Activated naive CD8-positive, alpha-beta T cell treated with anti-CD3 and anti-CD28 coated beads, Interleukin-2, amount 10 ng/mL, durations not matched to agents 7 days and 5 days (primary cell): ENCODE measurements at regions of chr3 and their contacts with region 1.

Region 1: DNA sequence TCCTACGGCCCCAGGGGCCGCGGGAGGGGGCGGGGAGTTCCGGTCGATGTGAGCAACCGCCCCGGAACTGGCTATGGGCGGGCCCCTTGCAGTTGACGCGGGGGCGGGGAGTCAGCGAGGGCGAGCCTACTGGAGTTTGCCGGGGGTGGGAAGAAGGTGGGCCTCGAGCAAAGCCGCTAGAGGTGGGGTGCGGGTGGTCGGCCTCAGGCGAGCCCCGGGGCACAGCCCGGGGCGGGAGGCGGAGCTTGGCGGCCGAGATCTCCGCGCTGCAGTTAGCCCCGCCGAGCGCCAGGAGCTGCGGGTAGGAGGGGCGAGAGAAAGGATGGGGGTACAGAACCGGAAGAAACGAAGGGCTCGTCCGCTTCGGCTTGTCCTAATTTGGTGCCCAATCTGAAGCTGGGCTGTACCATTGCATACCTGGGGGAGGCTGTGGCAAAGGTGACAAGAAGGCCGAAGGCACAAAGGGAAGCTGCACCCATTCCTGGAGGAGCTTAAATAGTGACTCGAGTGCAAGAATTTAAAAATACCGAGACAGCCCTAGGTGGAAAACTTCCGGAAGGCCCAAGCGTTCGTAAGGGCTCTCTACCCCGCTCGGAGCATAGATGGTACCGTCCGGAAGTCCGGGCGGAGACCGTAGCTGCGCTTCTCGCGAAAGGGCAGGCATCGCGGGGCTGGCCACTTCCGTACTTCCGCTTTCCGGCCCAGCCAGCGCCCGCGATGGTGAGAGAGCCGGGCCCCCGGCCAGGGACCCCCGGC is at the starts of genes ARPC4 and TADA3:
- DNase-seq: peak; percentile 95
- ATAC-seq: peak; percentile 89
- H3K4me3 Mint-ChIP-seq: peak within 1 kb of the TSS; percentile 99
- H3K27ac Mint-ChIP-seq: peak within 1 kb of the TSS; percentile 100
- H3K4me1 Mint-ChIP-seq: peaks cover 51% of the 10 kb centered on the region
- H3K27me3 Mint-ChIP-seq: no peaks in the 10 kb centered on the region
- total RNA-seq, gene ARPC4: 225 to 227 TPM
- total RNA-seq, gene TADA3: 71.8 to 73.3 TPM

Region 2: DNA sequence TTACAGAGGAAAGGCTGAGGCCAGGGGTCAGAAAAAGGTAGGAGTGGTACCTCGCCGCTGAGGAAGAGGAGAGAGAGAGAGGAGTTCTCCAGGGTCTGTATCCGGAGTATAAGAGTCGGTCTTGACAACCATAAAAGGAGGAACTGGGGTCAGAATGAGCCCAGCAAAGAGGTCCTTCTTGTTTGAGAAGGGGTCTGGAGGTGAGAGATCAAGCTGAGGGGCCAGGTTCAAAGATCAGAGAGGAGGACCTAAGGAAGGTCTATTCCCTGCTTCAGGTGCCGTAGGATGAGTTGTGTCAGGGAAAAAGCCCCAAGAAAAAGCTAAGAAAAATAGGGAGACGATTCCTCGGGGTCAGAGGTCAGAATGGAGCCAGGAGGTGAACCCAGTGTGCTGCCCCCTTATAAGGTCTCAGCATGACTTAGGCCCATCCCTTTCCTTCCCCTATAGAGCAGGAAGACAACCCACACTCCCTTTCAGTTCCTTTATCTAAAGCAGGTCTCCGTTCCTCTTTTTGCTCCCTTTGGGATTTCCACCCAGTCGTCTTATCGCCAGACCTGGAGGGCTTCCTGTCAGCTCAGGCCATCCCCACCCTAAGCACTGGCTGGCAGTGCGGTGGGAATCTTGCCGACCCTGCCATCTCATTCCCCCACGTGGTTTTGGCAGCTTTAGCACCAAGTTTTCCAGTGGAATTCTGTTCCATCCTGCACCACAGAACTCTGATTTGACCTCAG is 142.6 kb before region 1 on chr3:
- POLR2A ChIA-PET with region 1: interaction called, 10 read pairs
- DNase-seq: no peak
- ATAC-seq: peak; percentile 30
- H3K4me3 Mint-ChIP-seq: peak overlapping the region; percentile 96
- H3K27ac Mint-ChIP-seq: peak overlapping the region; percentile 98
- H3K4me1 Mint-ChIP-seq: peaks cover 13% of the 10 kb centered on the region
- H3K27me3 Mint-ChIP-seq: peaks cover 1% of the 10 kb centered on the region

Region 3: GRCh38 chr3:9731206-9732079 is 61.1 kb before region 1 on chr3 and contains the start of gene BRPF1:
- POLR2A ChIA-PET with region 1: interaction called, 29 read pairs
- DNase-seq: peak; percentile 97
- ATAC-seq: peak; percentile 92
- H3K4me3 Mint-ChIP-seq: peak within 1 kb of the TSS; percentile 98
- H3K27ac Mint-ChIP-seq: peak within 1 kb of the TSS; percentile 96
- H3K4me1 Mint-ChIP-seq: peaks cover 60% of the 10 kb centered on the region
- H3K27me3 Mint-ChIP-seq: no peaks in the 10 kb centered on the region
- total RNA-seq, gene BRPF1: 57.3 to 58.8 TPM

Region 4: DNA sequence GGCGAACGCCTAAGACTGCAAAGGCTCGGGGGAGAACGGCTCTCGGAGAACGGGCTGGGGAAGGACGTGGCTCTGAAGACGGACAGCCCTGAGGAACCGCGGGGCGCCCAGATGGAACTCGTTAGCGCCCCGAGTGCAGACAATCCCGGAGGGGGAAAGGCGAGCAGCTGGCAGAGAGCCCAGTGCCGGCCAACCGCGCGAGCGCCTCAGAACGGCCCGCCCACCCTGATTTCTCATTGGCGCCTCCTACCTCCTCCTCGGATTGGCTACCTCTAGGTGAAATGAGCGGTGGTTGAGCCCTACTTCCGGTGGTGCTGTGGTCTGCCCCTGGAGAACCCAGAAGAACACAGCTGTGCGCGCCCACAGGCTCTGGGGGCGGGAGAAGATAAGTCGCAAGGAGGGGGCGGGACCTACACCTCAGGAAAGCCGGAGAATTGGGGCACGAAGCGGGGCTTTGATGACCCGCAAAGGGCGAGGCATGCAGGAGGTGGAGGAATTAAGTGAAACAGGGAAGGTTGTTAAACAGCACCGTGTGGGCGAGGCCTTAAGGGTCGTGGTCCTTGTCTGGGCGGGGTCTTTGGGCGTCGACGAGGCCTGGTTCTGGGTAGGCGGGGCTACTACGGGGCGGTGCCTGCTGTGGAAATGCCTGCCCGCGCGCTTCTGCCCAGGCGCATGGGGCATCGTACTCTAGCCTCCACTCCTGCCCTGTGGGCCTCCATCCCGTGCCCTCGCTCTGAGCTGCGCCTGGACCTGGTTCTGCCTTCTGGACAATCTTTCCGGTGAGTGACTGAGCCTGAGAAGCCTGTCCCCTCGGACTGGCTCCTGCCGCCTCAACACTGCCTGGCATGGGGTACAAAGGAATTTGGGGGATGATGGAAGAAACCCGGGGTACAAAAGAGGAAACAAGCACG is 42.7 kb before region 1 on chr3 and contains the start of gene OGG1:
- POLR2A ChIA-PET with region 1: interaction called, 27 read pairs
- DNase-seq: peak; percentile 96
- ATAC-seq: peak; percentile 91
- H3K4me3 Mint-ChIP-seq: peak within 1 kb of the TSS; percentile 98
- H3K27ac Mint-ChIP-seq: peak within 1 kb of the TSS; percentile 94
- H3K4me1 Mint-ChIP-seq: peaks cover 51% of the 10 kb centered on the region
- H3K27me3 Mint-ChIP-seq: no peaks in the 10 kb centered on the region
- total RNA-seq, gene OGG1: 41.3 to 46.1 TPM

Region 5: GRCh38 chr3:9769426-9770275 is 22.9 kb before region 1 on chr3 and contains the start of gene CAMK1:
- POLR2A ChIA-PET with region 1: interaction called, 18 read pairs
- DNase-seq: peak; percentile 81
- ATAC-seq: peak; percentile 96
- H3K4me3 Mint-ChIP-seq: peak within 1 kb of the TSS; percentile 77
- H3K27ac Mint-ChIP-seq: peak within 1 kb of the TSS; percentile 67
- H3K4me1 Mint-ChIP-seq: peaks cover 33% of the 10 kb centered on the region
- H3K27me3 Mint-ChIP-seq: no peaks in the 10 kb centered on the region
- total RNA-seq, gene CAMK1: 25.2 to 26.9 TPM

Region 6: DNA sequence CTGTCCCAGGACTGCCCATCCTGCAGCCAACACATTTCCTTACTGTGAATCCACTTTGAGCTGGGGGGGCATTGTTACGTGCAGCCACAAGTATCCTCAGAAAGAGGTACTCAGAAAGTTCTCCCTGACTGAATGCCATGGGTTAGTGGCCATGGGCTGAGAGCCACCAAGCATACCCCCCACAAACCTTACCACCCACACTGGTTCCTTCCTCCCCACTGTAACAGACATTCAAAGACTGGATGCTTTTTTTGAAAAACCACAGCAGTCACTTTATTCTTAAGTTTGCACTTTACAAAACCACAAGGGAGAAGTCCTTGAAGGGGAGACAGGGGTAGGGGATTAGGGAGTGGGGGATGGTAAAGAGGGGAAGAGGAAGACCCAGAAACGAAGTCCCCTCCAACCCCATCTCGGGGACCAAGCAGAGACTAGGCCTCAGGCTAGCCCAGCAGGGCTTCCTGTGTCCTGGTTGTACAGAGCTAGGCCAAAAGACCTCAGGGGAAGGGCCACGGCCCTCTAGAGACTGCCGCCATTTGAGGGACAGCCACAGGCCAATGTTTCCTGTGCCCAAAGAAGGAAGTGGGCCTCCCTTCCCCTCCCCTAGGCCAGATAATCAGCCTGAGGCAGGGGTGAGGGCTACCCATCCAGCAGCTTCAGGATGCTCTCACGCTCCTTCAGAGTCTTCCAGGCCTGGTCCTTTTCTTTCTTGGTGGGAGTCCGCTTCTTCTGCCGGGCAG is 12.7 kb before region 1 on chr3:
- POLR2A ChIA-PET with region 1: interaction called, 47 read pairs
- DNase-seq: peak; percentile 75
- ATAC-seq: peak; percentile 84
- H3K4me3 Mint-ChIP-seq: peak overlapping the region; percentile 67
- H3K27ac Mint-ChIP-seq: peak overlapping the region; percentile 94
- H3K4me1 Mint-ChIP-seq: peaks cover 63% of the 10 kb centered on the region
- H3K27me3 Mint-ChIP-seq: peaks cover 2% of the 10 kb centered on the region

Region 7: DNA sequence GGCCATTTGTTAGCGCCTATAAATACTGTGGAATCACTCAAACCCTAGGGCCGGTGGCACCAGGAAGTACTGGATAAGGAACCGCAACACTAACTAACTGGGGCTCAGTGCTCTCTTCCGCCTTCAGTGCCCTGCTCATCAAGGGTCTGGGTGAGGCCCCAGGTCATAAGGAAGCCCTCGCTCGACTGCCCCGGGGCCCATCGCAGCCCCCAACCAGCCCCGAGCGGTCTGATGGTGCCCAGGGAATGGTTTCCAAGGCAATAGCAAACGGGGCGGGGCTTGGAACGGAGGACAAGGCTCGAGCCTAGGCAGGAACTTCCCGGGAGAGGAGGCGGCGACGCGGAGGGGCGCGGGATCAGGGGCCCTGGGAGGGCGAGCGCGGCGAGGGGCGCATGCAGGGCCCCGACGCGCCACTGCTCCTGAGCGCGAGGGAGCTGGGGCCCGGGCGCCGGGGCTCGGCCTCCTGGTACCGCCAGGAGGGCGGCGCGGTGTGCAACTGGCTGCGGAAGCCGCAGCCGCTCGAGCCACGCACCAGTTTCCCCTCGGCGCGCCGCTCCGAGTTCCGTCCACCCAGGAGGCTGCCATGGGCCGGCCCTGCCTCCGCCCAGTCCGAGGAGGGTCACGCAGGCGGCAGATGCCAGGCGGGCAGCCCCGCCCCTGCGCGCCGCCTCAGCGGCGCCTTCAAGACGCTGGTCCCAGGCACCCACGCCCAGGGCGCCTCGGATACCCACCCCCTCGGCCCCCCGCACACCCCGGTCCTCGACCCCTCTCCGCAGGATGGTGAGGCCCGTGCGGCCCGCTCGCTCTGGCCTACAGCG is 17.2 kb after region 1 on chr3 and contains the start of gene TTLL3:
- POLR2A ChIA-PET with region 1: interaction called, 36 read pairs
- DNase-seq: peak; percentile 73
- ATAC-seq: peak; percentile 71
- H3K4me3 Mint-ChIP-seq: peak within 1 kb of the TSS; percentile 88
- H3K27ac Mint-ChIP-seq: peak within 1 kb of the TSS; percentile 93
- H3K4me1 Mint-ChIP-seq: peaks cover 34% of the 10 kb centered on the region
- H3K27me3 Mint-ChIP-seq: no peaks in the 10 kb centered on the region
- total RNA-seq, gene TTLL3: 84.0 to 85.7 TPM

Region 8: GRCh38 chr3:9833078-9833477 is 40.5 kb after region 1 on chr3:
- POLR2A ChIA-PET with region 1: no interaction called
- DNase-seq: no peak
- ATAC-seq: no peak
- H3K4me3 Mint-ChIP-seq: no peak overlapping the region
- H3K27ac Mint-ChIP-seq: no peak overlapping the region
- H3K4me1 Mint-ChIP-seq: peaks cover 6% of the 10 kb centered on the region
- H3K27me3 Mint-ChIP-seq: no peaks in the 10 kb centered on the region

Region 9: DNA sequence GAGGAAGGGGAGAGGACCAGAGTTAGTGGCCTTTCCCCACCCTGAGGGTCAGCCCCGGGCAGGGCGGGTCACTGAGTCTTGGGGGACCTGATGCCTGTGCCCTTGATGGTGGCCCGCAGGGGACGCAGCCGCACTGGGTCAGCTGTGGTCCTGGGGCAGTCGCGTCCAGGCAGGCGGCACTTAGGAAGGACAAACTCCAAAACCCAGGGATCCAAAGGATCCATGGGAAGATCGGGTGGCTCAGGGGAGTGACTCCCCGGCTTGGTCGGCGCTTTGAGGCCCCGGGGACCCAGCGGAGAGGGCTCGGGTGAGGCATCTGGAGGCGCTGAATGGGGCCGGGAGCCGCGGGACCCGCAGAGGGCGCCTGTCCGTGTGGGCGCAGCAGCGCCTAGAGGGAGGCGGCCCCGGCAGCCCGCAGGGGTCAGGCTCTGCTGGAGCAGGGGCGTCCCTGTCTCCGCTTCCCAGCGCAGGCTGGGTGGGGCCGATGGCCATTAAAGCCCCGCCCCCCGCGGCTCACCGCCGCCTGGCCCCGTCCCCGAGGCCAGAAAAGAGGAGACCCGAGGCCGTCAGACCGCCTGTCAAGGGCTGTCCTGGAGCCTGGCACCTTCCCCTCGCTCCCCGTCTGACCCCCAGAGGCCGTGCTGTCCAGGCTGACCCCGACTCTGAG is 69.9 kb after region 1 on chr3:
- POLR2A ChIA-PET with region 1: no interaction called
- DNase-seq: peak; percentile 57
- ATAC-seq: peak; percentile 80
- H3K4me3 Mint-ChIP-seq: peak overlapping the region; percentile 25
- H3K27ac Mint-ChIP-seq: no peak overlapping the region
- H3K4me1 Mint-ChIP-seq: peaks cover 1% of the 10 kb centered on the region
- H3K27me3 Mint-ChIP-seq: peaks cover 21% of the 10 kb centered on the region